ENCODE measurements at regions of chr2 and their contacts with region 1.

Region 1: GRCh38 chr2:236512902-236513435 is 56.7 kb upstream of the ACKR3 start:
- DNase-seq: peak; percentile 68
- H3K4me3 Mint-ChIP-seq: no peak overlapping the region
- H3K27ac Mint-ChIP-seq: no peak overlapping the region
- H3K4me1 Mint-ChIP-seq: no peaks in the 10 kb centered on the region
- H3K27me3 Mint-ChIP-seq: peaks cover 14% of the 10 kb centered on the region
- CTCF ChIP-seq: peak; percentile 86

Region 2: DNA sequence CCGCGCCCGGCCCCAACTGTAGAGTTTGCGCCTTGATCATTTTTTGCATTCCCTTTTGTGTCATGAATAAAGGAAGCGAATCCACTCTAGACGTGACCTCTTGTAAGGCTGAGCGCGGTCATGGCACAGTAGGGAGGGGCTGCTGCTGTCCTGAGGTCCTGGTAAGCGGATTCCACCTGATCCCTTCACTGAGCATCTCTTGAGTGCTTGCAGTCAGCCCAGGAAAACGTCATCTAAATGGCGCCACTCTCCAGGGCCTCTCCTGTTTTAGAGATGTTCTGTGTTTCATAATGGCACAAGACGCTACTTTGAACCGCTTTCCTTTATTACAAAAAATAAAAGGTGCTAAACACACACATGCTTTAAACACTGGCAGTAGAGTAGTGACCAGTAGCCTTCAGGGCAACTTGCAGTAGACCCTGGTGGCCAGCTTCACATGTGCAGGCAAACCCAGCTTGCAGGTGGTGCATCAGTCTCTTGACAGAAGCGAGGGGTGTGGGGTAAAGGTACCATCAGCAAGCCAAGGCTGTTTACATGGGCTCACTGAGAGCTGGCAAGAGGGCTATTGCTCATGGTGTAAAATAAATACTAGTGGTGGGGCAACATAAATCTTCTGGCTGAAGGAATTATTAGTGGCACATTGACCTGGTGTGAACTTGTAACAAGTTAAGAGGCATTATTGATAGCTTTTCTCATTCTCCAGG is 13.6 kb after region 1 on chr2:
- CTCF ChIA-PET with region 1: interaction called, 16 read pairs
- intact Hi-C with region 1: no loop called
- DNase-seq: no peak
- H3K4me3 Mint-ChIP-seq: no peak overlapping the region
- H3K27ac Mint-ChIP-seq: no peak overlapping the region
- H3K4me1 Mint-ChIP-seq: no peaks in the 10 kb centered on the region
- H3K27me3 Mint-ChIP-seq: peaks cover 70% of the 10 kb centered on the region
- CTCF ChIP-seq: no peak

Region 3: GRCh38 chr2:236569573-236569973 is 56.6 kb after region 1 on chr2 and contains the start of gene ACKR3:
- CTCF ChIA-PET with region 1: interaction called, 40 read pairs
- intact Hi-C with region 1: loop called (anchors 1 kb)
- DNase-seq: peak; percentile 76
- H3K4me3 Mint-ChIP-seq: peak within 1 kb of the TSS; percentile 80
- H3K27ac Mint-ChIP-seq: peak within 1 kb of the TSS; percentile 23
- H3K4me1 Mint-ChIP-seq: peaks cover 28% of the 10 kb centered on the region
- H3K27me3 Mint-ChIP-seq: peaks cover 14% of the 10 kb centered on the region
- CTCF ChIP-seq: peak; percentile 58
- total RNA-seq, gene ACKR3: 8.8 and 9.5 TPM in 2 replicates

Region 4: DNA sequence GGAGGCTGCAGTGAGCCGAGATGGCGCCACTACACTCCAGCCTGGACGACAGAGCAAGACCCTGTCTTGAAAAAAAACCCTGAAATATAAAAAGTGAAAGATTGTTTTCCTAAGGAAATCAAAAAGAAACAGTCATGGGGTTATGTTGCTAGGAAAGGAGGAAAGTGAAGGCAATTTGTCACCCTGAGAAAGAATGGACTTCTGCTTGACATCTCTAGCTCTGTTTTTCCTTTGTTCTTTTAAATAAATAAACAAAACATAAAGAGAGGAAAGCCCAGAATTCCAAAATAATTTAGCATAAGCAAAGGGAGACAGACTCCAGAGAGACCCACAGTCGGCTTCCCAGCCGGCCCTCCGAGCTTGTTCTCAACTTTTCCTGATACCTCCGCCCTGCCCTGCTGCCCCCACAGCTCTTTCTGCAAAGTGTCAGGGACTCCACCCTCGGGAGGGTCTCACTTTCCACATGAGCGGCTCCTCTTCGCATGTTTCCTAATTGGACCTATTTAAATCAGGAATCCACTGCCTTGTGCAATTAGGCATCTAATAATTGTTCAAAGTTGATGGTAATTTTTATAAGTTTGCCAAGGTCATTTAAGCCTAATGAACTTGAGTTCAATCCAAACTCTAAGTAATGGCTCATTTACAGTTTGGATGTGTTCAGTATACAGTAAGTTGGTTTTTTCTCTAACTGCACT is 523.0 kb after region 1 on chr2:
- CTCF ChIA-PET with region 1: no interaction called
- intact Hi-C with region 1: no loop called
- DNase-seq: no peak
- H3K4me3 Mint-ChIP-seq: no peak overlapping the region
- H3K27ac Mint-ChIP-seq: no peak overlapping the region
- H3K4me1 Mint-ChIP-seq: no peaks in the 10 kb centered on the region
- H3K27me3 Mint-ChIP-seq: no peaks in the 10 kb centered on the region
- CTCF ChIP-seq: no peak

Region 5: GRCh38 chr2:237060534-237061312 is 547.8 kb after region 1 on chr2:
- CTCF ChIA-PET with region 1: interaction called, 6 read pairs
- intact Hi-C with region 1: loop called (anchors 2 kb)
- DNase-seq: peak; percentile 66
- H3K4me3 Mint-ChIP-seq: no peak overlapping the region
- H3K27ac Mint-ChIP-seq: no peak overlapping the region
- H3K4me1 Mint-ChIP-seq: no peaks in the 10 kb centered on the region
- H3K27me3 Mint-ChIP-seq: no peaks in the 10 kb centered on the region
- CTCF ChIP-seq: peak; percentile 62